PC-3 (cell line): ENCODE measurements at regions of chr3 and their contacts with region 1.

Region 1: GRCh38 chr3:55330355-55330754 is 156.8 kb downstream of the WNT5A start:
- DNase-seq: peak; percentile 94
- ATAC-seq: peak; percentile 97
- H3K4me3 ChIP-seq: peak overlapping the region; percentile 17; the same call in 1 of the 2 replicates
- H3K27ac ChIP-seq: peak overlapping the region; percentile 79
- H3K4me1 ChIP-seq: peaks cover 19% of the 10 kb centered on the region
- H3K27me3 ChIP-seq: no peaks in the 10 kb centered on the region
- CTCF ChIP-seq: no peak

Region 2: DNA sequence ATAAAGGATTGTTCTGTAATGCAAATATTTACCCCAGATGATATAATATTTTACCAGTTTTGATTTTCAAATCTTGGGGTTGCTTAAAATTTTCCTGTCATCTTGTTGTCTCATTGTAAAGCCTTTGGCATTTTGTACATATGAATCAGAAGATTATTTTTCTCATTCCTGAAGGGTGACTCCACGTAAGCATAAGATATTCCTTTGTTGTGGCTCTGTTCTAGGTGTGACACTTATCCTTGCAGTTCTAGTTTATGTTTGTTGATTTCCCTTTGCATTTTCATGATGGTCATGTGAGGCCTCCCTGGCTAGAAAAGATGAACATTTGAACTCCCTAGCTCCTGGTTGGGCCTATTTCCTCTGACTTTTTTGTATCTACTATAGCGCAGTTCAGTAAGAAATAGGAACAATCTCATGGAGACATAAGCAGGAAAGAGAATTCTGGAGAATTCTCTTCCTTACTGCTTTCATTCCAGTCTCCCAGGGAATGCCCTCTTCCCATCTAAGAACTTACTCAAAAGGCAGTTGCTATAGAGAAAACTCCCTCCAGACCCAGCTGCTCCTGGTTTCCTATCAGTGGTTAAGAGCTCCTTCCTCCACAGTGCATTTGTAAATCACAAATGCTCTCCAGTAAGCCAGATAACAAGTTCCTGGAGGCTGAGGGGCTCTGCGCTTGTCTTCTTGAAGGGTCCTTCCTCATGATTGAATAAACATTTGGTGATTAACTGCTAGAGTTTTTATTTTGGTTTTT is 32.0 kb after region 1 on chr3:
- CTCF ChIA-PET with region 1: no interaction called
- POLR2A ChIA-PET with region 1: no interaction called
- intact Hi-C with region 1: loop called (anchors 1 kb)
- DNase-seq: peak; percentile 80
- ATAC-seq: peak; percentile 78
- H3K4me3 ChIP-seq: no peak overlapping the region
- H3K27ac ChIP-seq: no peak overlapping the region
- H3K4me1 ChIP-seq: peaks cover 15% of the 10 kb centered on the region
- H3K27me3 ChIP-seq: no peaks in the 10 kb centered on the region
- CTCF ChIP-seq: no peak

Region 3: DNA sequence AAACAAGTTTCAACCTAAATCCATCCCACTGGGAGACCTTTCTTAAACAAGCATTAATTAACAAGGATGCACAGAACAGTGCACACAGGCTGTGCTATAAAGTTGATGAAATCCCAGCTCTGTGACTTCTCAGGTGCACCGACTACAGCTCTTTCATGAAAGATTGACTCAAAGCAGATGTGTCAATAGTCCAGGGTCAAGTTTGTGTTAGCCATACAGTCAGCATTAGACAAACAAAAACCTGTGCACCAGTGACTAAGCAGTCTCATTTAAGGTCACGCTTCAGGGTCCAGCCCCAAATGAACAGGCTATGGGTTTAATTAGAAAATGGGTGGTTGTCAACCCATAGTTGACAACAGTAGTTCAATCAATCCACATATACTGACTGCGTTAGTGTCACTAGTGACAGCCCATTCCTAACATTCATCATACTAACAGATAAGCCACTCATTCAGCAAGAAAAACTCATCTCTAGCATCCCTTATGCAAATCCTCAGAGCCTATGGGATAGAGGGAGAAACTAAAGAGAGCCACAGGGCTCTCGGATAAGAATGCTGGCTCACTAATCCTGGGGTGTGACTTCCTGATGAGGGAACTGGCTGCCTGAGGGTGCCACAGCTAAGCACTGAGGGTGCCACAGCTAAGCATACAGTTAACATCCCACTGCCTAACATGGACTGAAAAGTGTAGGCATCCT is 72.7 kb after region 1 on chr3:
- CTCF ChIA-PET with region 1: no interaction called
- POLR2A ChIA-PET with region 1: no interaction called
- intact Hi-C with region 1: loop called (anchors 2 kb)
- DNase-seq: peak; percentile 83
- ATAC-seq: peak; percentile 91
- H3K4me3 ChIP-seq: peak overlapping the region; percentile 10; the same call in 1 of the 2 replicates
- H3K27ac ChIP-seq: peak overlapping the region; percentile 65
- H3K4me1 ChIP-seq: peaks cover 40% of the 10 kb centered on the region
- H3K27me3 ChIP-seq: no peaks in the 10 kb centered on the region
- CTCF ChIP-seq: no peak

Region 4: DNA sequence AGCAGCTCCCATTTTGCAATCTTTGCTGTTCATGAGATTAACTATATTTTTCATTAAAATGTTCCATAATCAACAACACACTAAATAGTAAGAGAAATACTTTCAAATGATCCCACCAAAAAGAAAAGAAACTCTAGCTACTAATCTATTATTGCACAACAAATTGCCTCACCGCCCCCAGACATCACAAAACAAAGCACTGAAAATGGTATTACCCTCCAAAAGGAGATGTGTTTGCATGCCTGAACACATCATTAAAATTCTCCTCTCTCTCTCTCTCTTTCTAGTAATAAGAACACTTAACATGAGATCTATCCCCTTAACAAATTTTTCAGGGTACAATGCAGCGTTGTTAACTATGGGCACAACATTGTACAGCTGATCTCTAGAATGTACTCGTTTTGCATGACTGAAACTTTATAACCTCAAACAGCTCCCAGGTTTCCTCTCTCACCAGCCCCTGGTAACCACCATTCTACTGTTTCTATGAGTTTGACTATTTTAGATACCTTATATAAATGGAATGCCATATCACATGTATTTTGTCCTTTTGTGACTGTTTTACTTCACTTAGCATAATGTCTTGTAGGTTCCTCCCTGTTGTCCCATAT is 123.6 kb after region 1 on chr3:
- CTCF ChIA-PET with region 1: no interaction called
- POLR2A ChIA-PET with region 1: no interaction called
- intact Hi-C with region 1: loop called (anchors 1 kb)
- DNase-seq: no peak
- ATAC-seq: no peak
- H3K4me3 ChIP-seq: no peak overlapping the region
- H3K27ac ChIP-seq: no peak overlapping the region
- H3K4me1 ChIP-seq: peaks cover 7% of the 10 kb centered on the region; the same call in 1 of the 2 replicates
- H3K27me3 ChIP-seq: no peaks in the 10 kb centered on the region
- CTCF ChIP-seq: no peak

Region 5: GRCh38 chr3:55521738-55522421 is 191.5 kb after region 1 on chr3:
- CTCF ChIA-PET with region 1: no interaction called
- POLR2A ChIA-PET with region 1: no interaction called
- intact Hi-C with region 1: no loop called
- DNase-seq: no peak
- ATAC-seq: no peak
- H3K4me3 ChIP-seq: no peak overlapping the region
- H3K27ac ChIP-seq: no peak overlapping the region
- H3K4me1 ChIP-seq: peaks cover 59% of the 10 kb centered on the region
- H3K27me3 ChIP-seq: no peaks in the 10 kb centered on the region
- CTCF ChIP-seq: no peak